ENCODE measurements at regions of chr6 and their contacts with region 1.

Region 1: GRCh38 chr6:33276864-33277662 is at the start of gene B3GALT4:
- DNase-seq: peak; percentile 87
- ATAC-seq: peak; percentile 75
- H3K4me3 Mint-ChIP-seq: peak within 1 kb of the TSS; percentile 91
- H3K27ac Mint-ChIP-seq: peak within 1 kb of the TSS; percentile 92
- H3K4me1 Mint-ChIP-seq: peaks cover 39% of the 10 kb centered on the region
- H3K27me3 Mint-ChIP-seq: no peaks in the 10 kb centered on the region
- total RNA-seq, gene B3GALT4: 2.8 to 3.5 TPM

Region 2: DNA sequence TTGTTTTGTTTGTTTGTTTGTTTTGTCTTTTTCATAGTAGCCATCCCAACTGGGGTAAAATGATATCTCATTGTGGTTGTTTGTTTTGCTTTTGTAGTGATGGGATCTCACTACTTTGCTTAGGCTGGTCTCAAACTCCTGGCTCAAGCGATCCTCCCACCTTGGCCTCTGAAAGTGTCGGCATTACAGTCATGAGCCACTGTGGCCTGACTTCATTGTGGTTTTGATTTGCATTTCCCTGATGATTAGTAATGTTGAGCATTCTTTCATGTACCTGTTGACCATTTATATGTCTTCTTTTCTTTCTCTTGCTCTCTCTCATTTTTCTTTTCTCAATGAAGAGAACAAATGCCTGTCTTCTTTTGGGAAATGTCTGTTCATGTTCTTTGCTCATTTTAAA is 236.9 kb before region 1 on chr6:
- CTCF ChIA-PET with region 1: no interaction called
- POLR2A ChIA-PET with region 1: no interaction called
- intact Hi-C with region 1: no loop called
- DNase-seq: no peak
- ATAC-seq: no peak
- H3K4me3 Mint-ChIP-seq: no peak overlapping the region
- H3K27ac Mint-ChIP-seq: no peak overlapping the region
- H3K4me1 Mint-ChIP-seq: no peaks in the 10 kb centered on the region
- H3K27me3 Mint-ChIP-seq: peaks cover 12% of the 10 kb centered on the region

Region 3: GRCh38 chr6:33288921-33289748 is 12.1 kb after region 1 on chr6 and contains the starts of genes PFDN6 and WDR46:
- CTCF ChIA-PET with region 1: interaction called, 17 read pairs
- POLR2A ChIA-PET with region 1: interaction called, 25 read pairs
- intact Hi-C with region 1: loop called (anchors 1 kb)
- DNase-seq: peak; percentile 87
- ATAC-seq: peak; percentile 98
- H3K4me3 Mint-ChIP-seq: peak within 1 kb of the TSS; percentile 98
- H3K27ac Mint-ChIP-seq: peak within 1 kb of the TSS; percentile 97
- H3K4me1 Mint-ChIP-seq: peaks cover 37% of the 10 kb centered on the region
- H3K27me3 Mint-ChIP-seq: no peaks in the 10 kb centered on the region
- total RNA-seq, gene PFDN6: 65.4 to 96.9 TPM
- total RNA-seq, gene WDR46: 63.5 to 69.4 TPM

Region 4: DNA sequence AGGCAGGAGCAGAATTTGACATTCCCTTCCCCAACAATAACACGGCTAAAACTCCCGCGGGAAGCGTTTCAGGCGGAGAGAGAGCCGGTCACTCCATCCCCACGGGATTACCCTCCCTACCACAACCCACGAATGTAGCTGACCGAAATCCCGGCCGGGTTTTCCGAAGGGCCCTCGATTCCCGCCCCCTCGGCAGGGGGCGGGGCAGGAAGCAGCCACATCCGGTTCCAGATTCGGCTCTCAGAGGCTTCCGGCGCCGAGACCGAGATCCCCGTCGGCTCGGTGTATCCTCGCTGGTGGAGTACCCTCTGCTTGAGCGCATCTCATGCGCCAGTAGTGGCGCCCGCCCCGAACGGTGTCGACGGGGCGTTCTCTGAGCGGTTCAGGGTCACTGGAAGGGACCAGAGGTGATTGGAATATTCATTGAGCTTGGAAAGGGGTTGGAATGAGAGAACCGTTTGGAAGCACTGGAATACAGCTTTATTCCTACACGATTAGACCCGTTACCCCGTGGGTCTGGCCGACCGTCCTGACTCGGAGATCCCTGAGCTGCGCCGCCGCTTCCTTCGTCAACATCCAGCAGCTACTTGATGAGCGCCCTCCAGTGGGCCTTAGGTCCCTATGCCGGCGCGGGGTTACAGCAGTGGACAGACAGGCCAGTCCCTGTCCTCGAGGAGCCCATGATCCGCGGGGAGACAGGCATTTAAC is 22.3 kb after region 1 on chr6:
- CTCF ChIA-PET with region 1: interaction called, 6 read pairs
- POLR2A ChIA-PET with region 1: interaction called, 15 read pairs
- intact Hi-C with region 1: loop called (anchors 1 kb)
- DNase-seq: peak; percentile 97
- ATAC-seq: peak; percentile 87
- H3K4me3 Mint-ChIP-seq: peak overlapping the region; percentile 80
- H3K27ac Mint-ChIP-seq: peak overlapping the region; percentile 98
- H3K4me1 Mint-ChIP-seq: peaks cover 28% of the 10 kb centered on the region
- H3K27me3 Mint-ChIP-seq: no peaks in the 10 kb centered on the region

Region 5: GRCh38 chr6:33312409-33313158 is 35.5 kb after region 1 on chr6:
- CTCF ChIA-PET with region 1: interaction called, 8 read pairs
- POLR2A ChIA-PET with region 1: interaction called, 10 read pairs
- intact Hi-C with region 1: loop called (anchors 1 to 5 kb)
- DNase-seq: peak; percentile 90
- ATAC-seq: peak; percentile 40
- H3K4me3 Mint-ChIP-seq: peak overlapping the region; percentile 99
- H3K27ac Mint-ChIP-seq: peak overlapping the region; percentile 98
- H3K4me1 Mint-ChIP-seq: peaks cover 52% of the 10 kb centered on the region
- H3K27me3 Mint-ChIP-seq: no peaks in the 10 kb centered on the region

Region 6: GRCh38 chr6:33344701-33345697 is 67.9 kb after region 1 on chr6:
- CTCF ChIA-PET with region 1: interaction called, 4 read pairs
- POLR2A ChIA-PET with region 1: no interaction called
- intact Hi-C with region 1: loop called (anchors 2 kb)
- DNase-seq: peak; percentile 79
- ATAC-seq: peak; percentile 54
- H3K4me3 Mint-ChIP-seq: peak overlapping the region; percentile 56
- H3K27ac Mint-ChIP-seq: peak overlapping the region; percentile 78
- H3K4me1 Mint-ChIP-seq: peaks cover 21% of the 10 kb centered on the region
- H3K27me3 Mint-ChIP-seq: no peaks in the 10 kb centered on the region

Region 7: DNA sequence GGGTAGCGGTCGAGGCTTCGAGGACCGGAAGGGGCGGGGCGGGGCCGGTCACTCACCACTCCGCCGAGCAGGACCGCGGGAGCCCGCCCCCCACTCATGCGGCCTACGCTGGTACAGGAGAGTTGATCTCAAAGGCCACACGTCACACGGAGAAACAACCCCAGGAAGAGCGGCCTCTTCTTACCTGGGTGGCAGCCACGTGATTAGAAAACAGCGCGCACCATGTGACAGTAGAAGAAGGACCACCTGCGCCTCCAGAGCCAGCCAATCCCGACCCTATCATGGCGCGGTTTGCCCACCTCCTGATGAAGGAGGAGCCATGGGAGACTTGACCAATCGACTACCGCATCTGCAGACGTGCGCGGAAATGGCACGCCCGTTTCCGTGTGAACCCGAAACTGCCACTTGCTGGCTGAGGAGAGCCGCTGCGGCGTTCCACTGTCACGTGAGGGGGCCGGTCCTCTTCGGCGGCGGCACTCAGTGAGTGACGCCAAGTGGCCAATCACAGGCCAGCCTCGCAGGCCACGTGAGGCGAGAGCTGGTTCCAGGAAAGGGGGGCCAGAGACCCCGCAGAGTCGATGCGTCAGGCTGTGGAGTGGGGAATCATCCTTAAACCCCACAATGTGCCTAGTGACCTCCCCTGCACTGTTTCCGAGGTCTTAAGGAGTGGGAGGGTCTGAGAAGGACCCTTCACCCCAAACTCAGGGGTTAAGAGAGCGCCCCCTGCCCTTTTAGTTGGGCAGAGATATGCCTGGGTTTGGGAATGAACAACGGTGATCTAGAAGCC is 141.0 kb after region 1 on chr6 and contains the start of gene CUTA:
- CTCF ChIA-PET with region 1: no interaction called
- POLR2A ChIA-PET with region 1: interaction called, 3 read pairs
- intact Hi-C with region 1: loop called in 1 of 2 experiments (anchors 2 kb)
- DNase-seq: peak; percentile 100
- ATAC-seq: peak; percentile 87
- H3K4me3 Mint-ChIP-seq: peak within 1 kb of the TSS; percentile 96
- H3K27ac Mint-ChIP-seq: peak within 1 kb of the TSS; percentile 98
- H3K4me1 Mint-ChIP-seq: peaks cover 54% of the 10 kb centered on the region
- H3K27me3 Mint-ChIP-seq: no peaks in the 10 kb centered on the region
- total RNA-seq, gene CUTA: 154 to 188 TPM